ENCODE measurements at regions of chr1 and their contacts with region 1.

Region 1: DNA sequence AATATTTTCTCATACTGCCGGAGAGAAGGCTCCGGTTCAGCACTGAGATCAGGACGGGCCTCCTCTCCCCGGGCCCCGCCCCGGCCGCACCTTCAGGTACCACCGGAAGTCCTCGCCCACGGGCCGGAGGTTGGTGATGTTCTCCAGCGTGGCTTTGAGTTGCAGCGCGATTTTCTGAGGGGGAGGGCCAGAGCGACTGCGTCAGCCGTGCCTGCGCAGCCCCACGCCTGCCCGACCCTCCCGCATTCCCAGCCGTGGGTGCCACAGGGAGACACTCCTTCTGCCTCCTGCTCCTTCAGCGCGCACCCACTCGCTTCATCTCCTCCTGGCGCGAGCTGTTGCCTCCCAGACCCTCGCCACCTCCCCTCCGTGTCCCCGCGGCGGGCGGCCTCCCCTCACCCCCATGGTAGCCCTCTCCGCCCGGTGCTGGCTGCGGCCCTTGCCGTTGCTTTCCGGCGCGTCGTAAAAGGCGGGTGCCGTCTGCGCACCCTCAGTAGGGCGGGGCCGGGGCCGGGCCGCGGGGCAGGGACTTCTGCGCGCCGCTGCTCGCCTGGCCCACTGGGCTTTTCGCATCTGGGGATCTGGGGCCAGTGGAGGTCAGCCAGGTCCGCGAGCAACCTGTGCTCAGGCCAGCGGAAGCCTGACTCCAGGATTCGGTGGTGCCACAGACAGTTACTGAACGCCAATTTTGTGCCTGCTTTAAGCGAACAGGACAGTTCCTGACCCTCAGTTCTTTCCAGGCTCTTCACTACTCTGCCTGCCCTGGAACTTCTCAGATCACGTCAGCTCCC is at the start of gene CZIB:
- DNase-seq: peak; percentile 87
- ATAC-seq: peak; percentile 91
- H3K4me3 ChIP-seq: peak within 1 kb of the TSS; percentile 86 to 96 (median 95)
- H3K27ac ChIP-seq: peak within 1 kb of the TSS; percentile 90
- H3K4me1 ChIP-seq: peaks cover 25% of the 10 kb centered on the region
- H3K27me3 ChIP-seq: no peaks in the 10 kb centered on the region
- CTCF ChIP-seq: peak; percentile 18; the same call in 1 of the 2 replicates
- EP300 ChIP-seq: no peak; a peak in 1 of 4 replicates
- POLR2A ChIP-seq: peak; percentile 96 to 97
- RAD21 ChIP-seq: peak; percentile 43
- total RNA-seq, gene CZIB: 49.2 and 51.4 TPM in 2 replicates

Region 2: GRCh38 chr1:53196485-53197270 is 23.7 kb before region 1 on chr1 and contains the start of gene CPT2:
- CTCF ChIA-PET with region 1: no interaction called
- POLR2A ChIA-PET with region 1: interaction called, 5 read pairs
- in situ Hi-C with region 1: no loop called
- intact Hi-C with region 1: loop called (anchors 2 kb)
- DNase-seq: peak; percentile 79
- ATAC-seq: peak; percentile 98
- H3K4me3 ChIP-seq: peak within 1 kb of the TSS; percentile 84 to 91 (median 91)
- H3K27ac ChIP-seq: peak within 1 kb of the TSS; percentile 87
- H3K4me1 ChIP-seq: peaks cover 53% of the 10 kb centered on the region
- H3K27me3 ChIP-seq: no peaks in the 10 kb centered on the region; a peak in 1 of 5 replicates
- CTCF ChIP-seq: no peak
- EP300 ChIP-seq: peak in 1 of 2 experiments; percentile 27; a peak in 1 of 4 replicates
- POLR2A ChIP-seq: peak; percentile 78 to 97
- RAD21 ChIP-seq: no peak
- total RNA-seq, gene CPT2: 14.1 and 14.6 TPM in 2 replicates

Region 3: DNA sequence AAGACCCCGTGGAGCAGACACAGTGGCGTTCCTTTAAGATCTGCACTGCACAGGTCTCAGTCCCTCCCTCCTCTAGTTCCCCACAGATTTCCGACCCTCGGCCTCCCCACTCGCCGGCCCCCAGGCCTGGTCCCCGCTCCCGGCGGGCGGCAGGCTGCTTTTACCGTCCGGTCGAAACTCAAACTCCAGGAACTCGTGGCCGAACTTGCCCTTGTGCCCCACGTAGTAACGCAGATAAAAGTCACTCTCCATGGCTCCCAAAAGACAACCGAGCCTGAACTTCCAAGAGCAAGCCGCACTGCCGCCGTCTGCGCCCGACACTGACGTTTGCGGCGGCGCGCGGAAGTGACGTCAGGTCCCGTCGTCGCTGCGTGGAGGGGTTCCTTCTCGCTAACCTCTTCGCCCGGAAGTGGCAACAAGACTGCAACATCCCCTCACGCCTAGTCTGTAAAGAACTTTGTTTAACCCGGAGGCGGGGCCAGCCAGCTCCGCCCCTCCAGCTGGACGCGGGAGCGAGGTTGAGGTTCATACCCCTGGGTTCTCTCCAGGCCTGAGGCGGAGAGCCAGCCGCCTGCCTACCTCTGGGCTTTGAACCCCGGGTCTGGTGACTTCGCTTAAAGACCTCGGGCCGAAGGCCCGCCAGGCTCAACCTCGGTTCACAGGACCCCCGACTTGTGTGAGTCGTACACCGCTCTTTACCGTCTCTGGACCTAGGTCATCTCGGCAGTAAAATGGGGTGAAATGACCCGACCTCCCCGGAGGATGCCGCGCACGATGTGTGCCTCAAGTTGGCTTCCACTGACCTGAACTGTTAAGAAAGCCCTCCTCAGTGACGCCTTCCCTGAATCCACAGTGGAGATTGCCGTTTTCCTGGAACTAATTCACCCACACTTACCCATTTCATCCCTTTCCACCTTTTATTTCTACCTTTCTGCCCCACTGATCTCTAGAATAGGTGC is 18.1 kb after region 1 on chr1 and contains the start of gene MAGOH:
- CTCF ChIA-PET with region 1: no interaction called
- POLR2A ChIA-PET with region 1: interaction called, 5 read pairs
- in situ Hi-C with region 1: no loop called
- intact Hi-C with region 1: loop called (anchors 1 kb)
- DNase-seq: peak; percentile 94
- ATAC-seq: peak; percentile 97
- H3K4me3 ChIP-seq: peak within 1 kb of the TSS; percentile 87 to 98 (median 95)
- H3K27ac ChIP-seq: peak within 1 kb of the TSS; percentile 68
- H3K4me1 ChIP-seq: peaks cover 31% of the 10 kb centered on the region
- H3K27me3 ChIP-seq: peaks cover 0 to 3% of the 10 kb centered on the region in 2 experiments; a peak in 1 of 5 replicates
- CTCF ChIP-seq: no peak; the same call in 1 of the 2 replicates
- EP300 ChIP-seq: peak in 1 of 2 experiments; percentile 46; a peak in 1 of 4 replicates
- POLR2A ChIP-seq: peak; percentile 78 to 80
- RAD21 ChIP-seq: peak; percentile 32; the same call in 1 of the 2 replicates
- total RNA-seq, gene MAGOH: 87.0 and 145 TPM in 2 replicates

Region 4: DNA sequence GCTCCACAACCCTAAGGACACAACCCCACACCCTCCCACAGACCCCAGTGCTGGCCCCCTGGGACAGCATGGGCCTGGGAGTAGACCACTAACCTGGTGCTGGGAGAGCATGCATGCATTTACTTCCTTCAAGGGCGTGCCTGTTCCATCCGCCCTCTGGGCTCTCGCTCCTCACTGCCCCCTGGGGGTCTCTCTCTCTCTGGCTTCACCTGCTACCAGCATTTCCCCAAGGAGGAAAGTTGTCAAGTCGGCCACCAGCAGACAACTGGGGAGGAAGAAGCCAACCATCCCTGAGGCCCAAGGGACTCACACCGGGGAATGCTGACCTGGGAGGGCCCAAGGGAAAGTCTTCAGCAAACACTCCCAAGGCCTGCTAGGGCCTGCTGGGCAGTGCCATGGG is 101.0 kb after region 1 on chr1:
- CTCF ChIA-PET with region 1: no interaction called
- POLR2A ChIA-PET with region 1: no interaction called
- in situ Hi-C with region 1: no loop called
- intact Hi-C with region 1: no loop called
- DNase-seq: no peak
- ATAC-seq: no peak
- H3K4me3 ChIP-seq: no peak overlapping the region
- H3K27ac ChIP-seq: no peak overlapping the region
- H3K4me1 ChIP-seq: peaks cover 15% of the 10 kb centered on the region
- H3K27me3 ChIP-seq: no peaks in the 10 kb centered on the region
- CTCF ChIP-seq: peak; percentile 48
- EP300 ChIP-seq: no peak
- POLR2A ChIP-seq: no peak
- RAD21 ChIP-seq: no peak